Cardiac septum (tissue), 1 donor: ENCODE measurements at regions of chr2 and their contacts with region 1.

Region 1: DNA sequence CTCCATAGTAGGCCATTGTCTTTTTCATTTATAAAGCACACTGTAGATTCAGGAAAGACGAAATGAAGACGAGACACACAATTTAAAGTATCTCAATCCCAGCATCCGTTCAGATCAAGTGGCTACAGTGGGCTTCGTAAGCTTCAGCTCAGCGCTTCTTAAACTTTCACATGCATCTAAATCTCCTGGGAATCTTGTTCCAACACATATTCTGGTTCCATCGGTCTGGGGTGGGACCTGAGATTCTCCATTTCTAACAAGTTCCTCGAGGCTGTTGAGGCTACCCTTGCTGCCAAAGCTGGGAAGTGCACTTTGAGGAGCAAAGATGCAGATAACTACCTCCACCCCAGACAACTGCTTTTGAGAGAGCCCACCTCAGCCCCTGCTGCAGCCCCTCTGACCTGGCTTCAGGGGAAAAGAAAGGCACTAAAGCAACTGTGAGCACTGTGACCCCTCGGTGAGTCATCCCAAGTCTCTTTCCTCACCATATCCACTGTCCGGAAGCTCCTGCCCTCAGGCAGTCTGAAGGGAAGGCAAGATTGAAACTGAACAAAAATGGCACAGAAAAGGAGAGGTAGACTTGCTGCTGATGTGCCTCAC is 201.1 kb upstream of the FBXO11 start:
- DNase-seq: no peak

Region 2: GRCh38 chr2:47437287-47437686 is 670.1 kb before region 1 on chr2:
- intact Hi-C with region 1: loop called (anchors 10 kb)
- DNase-seq: no peak

Region 3: GRCh38 chr2:47782671-47783485 is 324.5 kb before region 1 on chr2 and contains the start of gene MSH6:
- intact Hi-C with region 1: loop called (anchors 2 kb)
- DNase-seq: peak; percentile 95
- total RNA-seq, gene MSH6: 22.0 TPM